ENCODE measurements at regions of chr9 and their contacts with region 1.

Region 1: DNA sequence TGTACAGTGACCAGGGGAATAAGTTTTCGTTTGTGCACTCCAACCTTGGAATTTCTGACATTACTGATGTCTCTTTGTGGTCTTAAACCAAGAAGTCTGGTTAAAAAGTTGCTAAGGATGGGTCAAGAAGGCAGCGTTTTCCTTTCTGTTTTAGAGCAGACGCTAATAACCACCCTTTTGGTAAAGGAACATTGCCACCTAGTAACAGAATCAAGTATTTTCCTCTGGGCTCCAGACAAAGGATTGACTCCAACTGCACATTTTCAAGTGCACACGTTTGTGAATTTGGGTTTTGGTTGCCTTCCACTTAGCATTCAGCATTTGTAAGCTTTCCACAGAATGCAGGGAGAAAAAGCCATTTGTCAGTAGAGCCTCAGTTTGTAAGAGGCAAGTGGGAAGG is 22.2 kb upstream of the CEP78 start:
- DNase-seq: peak; percentile 77
- H3K4me3 ChIP-seq: no peak overlapping the region
- H3K27ac ChIP-seq: no peak overlapping the region
- H3K4me1 ChIP-seq: peaks cover 2% of the 10 kb centered on the region
- H3K27me3 ChIP-seq: no peaks in the 10 kb centered on the region
- CTCF ChIP-seq: peak; percentile 17 to 46
- POLR2A ChIP-seq: no peak

Region 2: DNA sequence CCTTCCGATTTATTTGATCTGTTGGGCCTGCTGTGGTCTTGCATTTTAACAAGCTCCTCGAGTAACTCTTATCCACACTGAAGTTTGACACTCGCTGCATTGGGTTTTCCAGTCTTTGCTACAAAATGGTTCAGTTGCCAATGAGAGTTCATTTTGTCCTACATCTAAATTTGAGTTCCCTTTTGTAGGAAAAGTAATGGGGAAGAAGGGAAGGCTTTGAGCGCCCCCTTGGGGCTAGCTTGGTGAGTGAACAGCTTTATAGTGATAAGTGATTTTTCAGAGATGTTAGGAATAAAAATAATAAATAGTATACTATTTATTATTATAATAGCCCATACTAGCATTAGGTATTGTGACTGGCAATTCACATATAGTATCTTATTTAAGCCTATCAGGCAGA is 92.2 kb before region 1 on chr9:
- CTCF ChIA-PET with region 1: interaction called, 13 read pairs
- POLR2A ChIA-PET with region 1: no interaction called
- dilution Hi-C with region 1: no loop called
- intact Hi-C with region 1: no loop called
- DNase-seq: peak; percentile 76
- H3K4me3 ChIP-seq: no peak overlapping the region
- H3K27ac ChIP-seq: no peak overlapping the region
- H3K4me1 ChIP-seq: no peaks in the 10 kb centered on the region
- H3K27me3 ChIP-seq: no peaks in the 10 kb centered on the region
- CTCF ChIP-seq: peak; percentile 64 to 65
- POLR2A ChIP-seq: no peak

Region 3: DNA sequence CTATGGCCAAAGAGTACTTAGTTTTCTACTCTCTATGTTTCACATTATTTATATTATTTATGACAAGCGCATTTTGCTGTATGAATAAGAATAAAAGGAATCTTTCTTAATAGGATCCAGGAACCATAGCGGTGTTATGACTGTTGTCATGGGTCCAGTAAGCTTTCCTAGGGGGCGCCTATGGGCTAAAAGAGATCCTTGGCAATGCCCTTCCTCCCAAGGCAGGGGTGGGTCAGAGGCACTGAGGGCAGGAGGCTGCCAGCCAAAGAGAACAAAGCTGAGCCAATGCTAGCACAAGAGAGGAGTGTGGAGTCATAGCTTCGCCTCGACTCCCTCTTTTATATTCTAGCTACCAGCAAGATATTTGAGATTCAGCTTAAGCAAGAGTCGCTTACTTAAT is 83.7 kb before region 1 on chr9:
- CTCF ChIA-PET with region 1: interaction called, 30 read pairs
- POLR2A ChIA-PET with region 1: no interaction called
- dilution Hi-C with region 1: no loop called
- intact Hi-C with region 1: loop called (anchors 5 kb)
- DNase-seq: peak; percentile 87
- H3K4me3 ChIP-seq: no peak overlapping the region
- H3K27ac ChIP-seq: no peak overlapping the region
- H3K4me1 ChIP-seq: peaks cover 11% of the 10 kb centered on the region
- H3K27me3 ChIP-seq: no peaks in the 10 kb centered on the region
- CTCF ChIP-seq: peak; percentile 36 to 55
- POLR2A ChIP-seq: no peak

Region 4: DNA sequence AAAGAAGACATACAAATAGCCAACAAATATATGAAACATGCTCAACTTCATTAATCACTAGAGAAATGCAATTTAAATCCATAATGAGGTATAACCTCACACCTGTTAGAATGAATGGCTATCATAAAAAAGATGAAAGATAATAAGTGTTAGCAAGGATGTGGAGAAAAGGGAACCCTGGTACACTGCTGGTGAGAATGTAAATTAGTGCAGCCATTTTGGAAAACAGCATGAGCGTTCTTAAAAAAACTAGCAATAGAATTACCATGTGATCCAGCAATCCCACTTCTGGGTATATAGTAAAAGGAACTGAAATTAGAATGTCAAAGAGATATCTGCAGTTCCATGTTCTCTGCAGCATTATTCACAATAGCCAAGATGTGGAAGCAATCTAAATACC is 42.1 kb before region 1 on chr9:
- CTCF ChIA-PET with region 1: no interaction called
- POLR2A ChIA-PET with region 1: no interaction called
- dilution Hi-C with region 1: no loop called
- intact Hi-C with region 1: no loop called
- DNase-seq: no peak
- H3K4me3 ChIP-seq: no peak overlapping the region
- H3K27ac ChIP-seq: no peak overlapping the region
- H3K4me1 ChIP-seq: no peaks in the 10 kb centered on the region
- H3K27me3 ChIP-seq: peaks cover 0 to 6% of the 10 kb centered on the region in 2 experiments
- CTCF ChIP-seq: no peak
- POLR2A ChIP-seq: no peak

Measured in endothelial cell of umbilical vein (primary cell).